ENCODE measurements at regions of chr5 and their contacts with region 1.

Region 1: DNA sequence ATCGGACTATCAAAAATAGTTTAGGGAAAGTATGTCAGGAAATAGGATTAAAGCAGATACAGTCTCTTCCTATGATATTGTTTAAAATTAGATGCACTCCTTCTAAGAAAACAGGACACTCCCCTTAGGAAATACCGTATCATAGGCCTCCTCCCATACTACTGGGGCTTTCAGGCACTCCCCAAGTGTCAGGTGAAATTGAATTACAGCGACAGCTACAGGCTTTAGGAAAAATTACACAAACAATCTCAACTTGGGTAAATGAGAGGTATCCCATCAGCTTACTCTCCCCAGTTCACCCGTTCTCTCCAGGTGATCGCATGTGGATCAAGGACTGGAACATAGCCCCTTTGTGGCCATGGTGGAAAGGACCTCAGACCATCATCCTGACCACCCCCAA is 110.4 kb upstream of the EPB41L4A start:
- DNase-seq: no peak
- H3K4me3 Mint-ChIP-seq: no peak overlapping the region
- H3K27ac Mint-ChIP-seq: no peak overlapping the region
- H3K4me1 Mint-ChIP-seq: peaks cover 19% of the 10 kb centered on the region
- H3K27me3 Mint-ChIP-seq: no peaks in the 10 kb centered on the region
- CTCF ChIP-seq: peak; percentile 59

Region 2: GRCh38 chr5:112174959-112175594 is 354.4 kb before region 1 on chr5:
- CTCF ChIA-PET with region 1: no interaction called
- intact Hi-C with region 1: loop called (anchors 1 kb)
- DNase-seq: peak; percentile 57
- H3K4me3 Mint-ChIP-seq: no peak overlapping the region
- H3K27ac Mint-ChIP-seq: no peak overlapping the region
- H3K4me1 Mint-ChIP-seq: no peaks in the 10 kb centered on the region
- H3K27me3 Mint-ChIP-seq: no peaks in the 10 kb centered on the region
- CTCF ChIP-seq: peak; percentile 67

Region 3: DNA sequence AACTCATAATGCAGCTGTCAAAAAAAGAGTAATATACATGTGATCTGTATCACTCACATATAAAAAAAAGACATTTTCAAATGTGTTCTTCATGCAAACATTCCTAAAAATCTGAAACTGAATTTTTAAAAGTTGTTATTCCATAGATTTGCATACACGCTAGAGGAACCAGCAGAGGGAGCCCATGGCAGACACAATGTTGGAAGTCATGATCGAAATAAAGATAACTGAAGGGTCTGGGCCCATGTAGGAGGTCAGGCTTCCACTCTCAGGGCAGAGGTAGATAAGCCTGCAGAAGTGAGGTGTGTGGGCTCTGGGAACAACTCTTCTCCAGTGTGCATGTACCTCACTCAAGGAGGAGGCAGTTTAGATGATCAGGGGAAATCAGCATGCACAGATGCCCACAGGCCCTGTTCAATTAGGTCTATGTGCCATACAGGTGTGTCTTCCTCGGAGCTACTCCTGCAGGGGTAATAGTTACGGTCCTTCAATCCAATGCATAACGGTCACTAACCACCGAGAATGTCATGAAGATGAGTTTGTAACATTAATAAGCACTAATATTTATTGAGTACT is 319.0 kb before region 1 on chr5:
- CTCF ChIA-PET with region 1: no interaction called
- intact Hi-C with region 1: loop called (anchors 10 kb)
- DNase-seq: peak; percentile 66
- H3K4me3 Mint-ChIP-seq: no peak overlapping the region
- H3K27ac Mint-ChIP-seq: no peak overlapping the region
- H3K4me1 Mint-ChIP-seq: peaks cover 17% of the 10 kb centered on the region
- H3K27me3 Mint-ChIP-seq: no peaks in the 10 kb centered on the region
- CTCF ChIP-seq: peak; percentile 55

Region 4: DNA sequence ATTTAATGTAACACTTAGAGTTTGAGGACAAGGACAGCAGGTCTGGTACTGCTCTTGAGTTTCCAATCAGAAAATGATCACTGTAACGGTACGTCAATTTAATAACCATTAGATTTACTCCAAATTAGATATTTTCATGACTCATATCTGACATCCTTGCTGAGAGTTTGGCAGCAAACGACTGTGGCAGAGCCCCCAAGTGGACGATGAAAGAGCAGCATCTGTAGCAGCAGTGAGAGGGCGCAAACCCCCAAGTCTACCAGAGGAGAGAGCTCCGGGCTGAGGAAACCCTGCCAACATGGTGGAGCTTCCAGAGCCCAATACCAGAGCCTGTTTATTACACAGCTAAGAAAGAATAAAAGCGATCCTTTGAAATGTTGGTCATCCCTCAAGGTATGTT is 37.2 kb before region 1 on chr5:
- CTCF ChIA-PET with region 1: interaction called, 14 read pairs
- intact Hi-C with region 1: no loop called
- DNase-seq: peak; percentile 77
- H3K4me3 Mint-ChIP-seq: no peak overlapping the region
- H3K27ac Mint-ChIP-seq: no peak overlapping the region
- H3K4me1 Mint-ChIP-seq: no peaks in the 10 kb centered on the region
- H3K27me3 Mint-ChIP-seq: no peaks in the 10 kb centered on the region
- CTCF ChIP-seq: peak; percentile 84

Measured in Calu3 (cell line).